Activated T-helper 1 cell treated with anti-CD3 and anti-CD28 coated beads, Interleukin-12 subunit alpha, Interleukin-12 subunit beta, Interleukin-2, Interleukin-4 antibody, amounts not matched to agents 30 ng/mL and 10 ng/mL and 1 ng/mL, durations not matched to agents 14 hours and 24 hours and 36 hours (primary cell): ENCODE measurements at regions of chr12 and their contacts with region 1.

Region 1: DNA sequence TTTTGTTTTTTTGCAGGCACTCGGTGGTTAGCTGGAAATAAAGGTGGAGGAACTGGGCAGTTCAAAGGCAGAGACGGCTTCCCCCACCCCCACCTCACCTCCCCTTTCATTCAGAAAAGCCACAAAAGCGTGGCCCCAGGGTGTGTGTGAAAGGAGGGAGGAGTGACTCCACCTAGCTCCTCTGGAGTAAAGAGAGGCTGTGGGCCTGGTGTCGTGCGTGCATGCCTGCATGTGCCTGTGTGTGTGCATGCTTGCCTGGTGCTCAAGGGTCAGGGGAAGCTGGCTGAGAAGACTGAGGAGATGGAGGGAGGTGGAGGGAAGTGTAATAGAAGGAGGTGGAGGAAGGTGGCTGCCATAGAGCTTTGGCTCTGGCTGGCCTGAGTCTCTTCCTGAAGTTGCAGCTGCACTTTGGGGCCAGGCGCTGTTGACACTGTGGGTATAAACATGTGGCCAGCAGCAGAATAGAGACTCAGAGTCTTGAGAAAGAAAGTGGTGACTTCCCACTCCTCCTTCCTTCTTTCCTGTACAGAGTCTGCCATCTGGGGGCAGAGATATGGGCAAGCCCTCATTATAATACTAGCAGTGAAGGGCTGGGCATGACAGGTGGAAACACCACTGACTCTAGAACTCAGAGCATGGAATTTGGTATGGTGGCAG is 36.9 kb upstream of the SINHCAF start:
- DNase-seq: peak; percentile 24
- H3K4me3 Mint-ChIP-seq: peak overlapping the region; percentile 66
- H3K27ac Mint-ChIP-seq: peak overlapping the region; percentile 85
- H3K4me1 Mint-ChIP-seq: peaks cover 21% of the 10 kb centered on the region
- H3K27me3 Mint-ChIP-seq: peaks cover 5% of the 10 kb centered on the region

Region 2: DNA sequence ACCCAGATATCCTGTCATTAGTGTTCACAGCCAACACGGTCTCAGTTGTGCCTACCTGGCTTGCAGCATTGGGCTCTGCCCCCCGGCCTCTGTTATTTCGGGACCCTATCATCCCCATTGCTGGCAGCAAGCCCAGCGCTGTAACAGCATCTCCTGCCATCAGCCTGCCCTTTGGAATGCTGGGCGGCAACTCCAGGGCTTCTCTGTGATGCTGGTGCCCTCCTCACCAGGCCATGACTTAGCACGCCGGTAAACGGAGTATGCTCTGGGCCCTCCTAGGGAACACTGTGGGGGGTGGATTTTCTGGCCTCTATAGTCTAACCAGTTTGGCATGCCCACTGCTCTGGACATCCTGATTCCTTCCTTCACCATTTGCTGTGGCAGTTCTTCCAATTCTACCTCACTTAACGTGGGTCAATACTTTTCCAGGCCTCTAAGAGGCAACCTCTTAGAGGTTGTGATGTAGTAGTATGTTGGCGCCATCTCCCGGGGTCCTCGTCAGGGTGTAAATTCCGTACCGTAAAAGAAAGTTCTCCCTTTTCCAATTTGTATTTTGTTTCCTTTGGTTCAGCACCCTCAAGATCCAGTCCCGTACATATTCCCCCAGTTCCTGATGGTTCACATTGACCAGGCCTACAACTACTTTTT is 116.9 kb before region 1 on chr12:
- intact Hi-C with region 1: loop called (anchors 1 kb)
- DNase-seq: no peak
- H3K4me3 Mint-ChIP-seq: no peak overlapping the region
- H3K27ac Mint-ChIP-seq: no peak overlapping the region
- H3K4me1 Mint-ChIP-seq: no peaks in the 10 kb centered on the region
- H3K27me3 Mint-ChIP-seq: peaks cover 9% of the 10 kb centered on the region

Region 3: DNA sequence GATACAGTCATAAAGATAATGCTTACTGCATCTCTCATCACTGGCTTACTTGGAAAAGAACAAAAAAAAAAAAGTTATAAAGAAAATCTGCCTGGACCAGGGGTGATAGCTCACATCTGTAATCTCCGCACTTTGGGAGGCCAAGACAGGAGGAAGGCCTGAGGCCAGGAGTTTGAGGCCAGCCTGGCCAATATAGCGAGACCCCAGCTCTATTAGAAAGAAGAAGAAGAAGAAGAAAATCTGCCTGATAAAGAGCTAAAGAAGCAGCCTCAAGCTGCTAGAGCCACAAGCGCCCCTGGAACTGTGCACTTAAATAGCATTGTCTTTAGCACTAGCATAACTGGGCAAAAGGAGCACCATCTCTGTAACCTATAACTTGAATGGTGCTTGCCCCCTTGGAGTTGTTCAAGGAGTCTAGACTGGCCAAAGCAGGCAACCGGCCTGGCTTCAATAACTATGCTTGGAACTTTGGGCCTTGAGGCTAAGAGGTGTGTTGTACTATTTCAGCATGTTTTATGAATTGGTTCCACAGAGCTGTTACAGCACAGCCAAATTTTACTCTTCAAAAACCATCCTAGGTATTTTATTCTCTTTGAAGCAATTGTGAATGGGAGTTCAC is 90.2 kb before region 1 on chr12:
- intact Hi-C with region 1: loop called (anchors 2 kb)
- DNase-seq: no peak
- H3K4me3 Mint-ChIP-seq: no peak overlapping the region
- H3K27ac Mint-ChIP-seq: peak overlapping the region; percentile 31
- H3K4me1 Mint-ChIP-seq: peaks cover 6% of the 10 kb centered on the region
- H3K27me3 Mint-ChIP-seq: no peaks in the 10 kb centered on the region

Region 4: GRCh38 chr12:31603546-31604009 is 240.7 kb after region 1 on chr12:
- intact Hi-C with region 1: no loop called
- DNase-seq: no peak
- H3K4me3 Mint-ChIP-seq: no peak overlapping the region
- H3K27ac Mint-ChIP-seq: no peak overlapping the region
- H3K4me1 Mint-ChIP-seq: no peaks in the 10 kb centered on the region
- H3K27me3 Mint-ChIP-seq: peaks cover 5% of the 10 kb centered on the region